ENCODE measurements at regions of chr4 and their contacts with region 1.

Region 1: GRCh38 chr4:158914218-158914617 is 145.4 kb downstream of the FNIP2 start:
- DNase-seq: no peak
- H3K4me3 ChIP-seq: no peak overlapping the region
- H3K27ac ChIP-seq: peak overlapping the region; percentile 79 to 88
- H3K4me1 ChIP-seq: peaks cover 8 to 18% of the 10 kb centered on the region in 2 donors
- H3K27me3 ChIP-seq: no peaks in the 10 kb centered on the region
- CTCF ChIP-seq: no peak

Region 2: DNA sequence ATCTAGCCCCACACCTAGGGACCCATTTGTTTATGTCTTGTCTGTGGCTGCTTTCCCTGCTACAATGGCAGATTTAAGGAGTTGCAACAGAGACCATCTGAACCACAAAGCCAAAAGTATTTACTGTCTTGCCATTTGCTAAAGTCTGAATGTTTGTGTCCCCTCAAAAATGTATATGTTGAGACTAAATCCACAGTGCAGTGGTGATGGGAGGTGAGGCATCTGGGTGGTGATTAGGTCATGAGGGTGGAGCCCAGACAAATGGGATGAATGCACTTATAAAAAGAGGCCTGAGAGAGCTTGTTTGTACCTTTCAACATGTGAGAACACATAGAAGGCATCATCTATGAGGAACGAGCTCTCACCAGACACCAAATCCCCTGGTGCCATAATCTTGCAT is 566.7 kb before region 1 on chr4:
- intact Hi-C with region 1: no loop called
- DNase-seq: no peak
- H3K4me3 ChIP-seq: no peak overlapping the region
- H3K27ac ChIP-seq: no peak overlapping the region
- H3K4me1 ChIP-seq: no peaks in the 10 kb centered on the region
- H3K27me3 ChIP-seq: no peaks in the 10 kb centered on the region
- CTCF ChIP-seq: no peak

Region 3: DNA sequence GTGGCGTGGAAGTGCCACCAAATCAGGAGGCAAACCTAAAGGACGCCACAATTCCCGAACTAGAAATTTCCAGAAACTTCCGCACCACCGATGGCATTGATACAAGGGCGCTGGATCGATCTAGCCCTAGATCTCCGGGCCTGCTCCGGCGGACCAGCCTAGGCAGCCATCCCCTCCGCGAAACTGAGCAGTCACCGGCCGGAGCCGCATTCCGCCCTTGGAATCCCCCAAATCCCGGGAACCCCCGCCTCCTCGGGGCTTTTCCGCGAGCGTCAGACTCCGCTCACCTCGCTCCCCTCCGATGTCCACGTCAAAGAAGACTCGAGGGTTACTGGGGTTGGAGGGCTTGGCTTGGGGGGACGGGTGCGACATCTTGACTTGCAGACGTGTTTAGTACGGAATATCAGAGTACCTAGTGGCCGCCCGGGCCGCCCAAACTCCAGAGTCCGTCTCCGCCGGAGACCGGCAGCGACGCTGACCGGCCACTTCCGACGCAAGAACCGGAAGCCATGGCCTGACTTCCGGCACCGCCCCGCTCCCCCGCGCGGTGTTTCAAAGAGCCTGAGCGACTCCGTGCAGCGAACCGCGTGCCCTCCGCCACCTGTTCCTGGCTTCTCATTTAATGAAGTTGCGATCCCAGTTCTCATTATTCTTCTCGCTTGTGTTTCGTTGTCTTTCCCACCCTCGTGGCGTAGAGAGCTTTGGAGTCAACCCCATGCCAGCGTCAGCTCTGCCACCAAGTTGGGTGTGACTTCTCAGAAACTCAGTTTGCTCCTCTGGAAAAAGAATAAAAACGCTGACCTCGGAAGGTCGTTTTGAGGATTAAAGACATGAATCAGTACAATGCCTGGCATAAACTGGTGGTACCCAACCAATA is 191.1 kb before region 1 on chr4 and contains the start of gene PPID:
- intact Hi-C with region 1: loop called (anchors 5 kb)
- DNase-seq: peak; percentile 11 to 90
- H3K4me3 ChIP-seq: peak within 1 kb of the TSS; percentile 68 to 85
- H3K27ac ChIP-seq: peak within 1 kb of the TSS; percentile 84 to 92
- H3K4me1 ChIP-seq: peaks cover 0 to 13% of the 10 kb centered on the region in 2 donors
- H3K27me3 ChIP-seq: no peaks in the 10 kb centered on the region
- CTCF ChIP-seq: no peak
- total RNA-seq, gene PPID: 20.8 TPM

Region 4: DNA sequence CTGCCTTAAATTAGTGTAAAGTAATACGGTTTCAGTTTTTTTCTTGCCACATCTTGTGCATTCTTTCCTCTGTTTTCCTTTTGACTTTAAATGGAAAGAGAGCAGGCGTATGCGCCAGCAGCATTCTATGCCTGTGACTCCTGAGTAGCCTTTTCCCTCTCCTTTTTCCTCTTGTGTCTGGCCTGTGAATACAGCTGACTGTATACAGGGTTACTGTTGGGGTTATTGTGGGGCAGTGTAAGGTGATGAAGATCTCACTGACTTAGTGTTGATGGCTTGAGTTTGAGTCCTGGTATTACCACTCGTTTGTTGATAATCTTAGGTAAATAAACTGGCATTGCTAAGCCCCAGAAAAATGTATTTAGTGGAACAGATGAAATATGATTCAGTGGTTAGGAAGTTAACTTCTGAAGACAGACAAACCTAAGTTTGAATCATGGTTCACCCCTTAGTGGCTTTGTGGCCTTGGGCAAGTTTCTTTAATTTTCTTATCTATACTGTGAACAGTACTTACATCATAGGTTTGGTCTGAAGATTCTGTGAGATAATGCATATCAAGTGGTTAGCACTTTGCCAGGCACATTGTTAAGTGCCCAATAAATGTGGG is 40.3 kb before region 1 on chr4:
- intact Hi-C with region 1: loop called (anchors 2 kb)
- DNase-seq: no peak
- H3K4me3 ChIP-seq: no peak overlapping the region
- H3K27ac ChIP-seq: peak overlapping the region; percentile 31 to 46
- H3K4me1 ChIP-seq: peaks cover 5 to 24% of the 10 kb centered on the region in 2 donors
- H3K27me3 ChIP-seq: no peaks in the 10 kb centered on the region
- CTCF ChIP-seq: no peak

Region 5: GRCh38 chr4:159042097-159042605 is 127.9 kb after region 1 on chr4:
- intact Hi-C with region 1: no loop called
- DNase-seq: no peak
- H3K4me3 ChIP-seq: no peak overlapping the region
- H3K27ac ChIP-seq: no peak overlapping the region
- H3K4me1 ChIP-seq: no peaks in the 10 kb centered on the region
- H3K27me3 ChIP-seq: no peaks in the 10 kb centered on the region
- CTCF ChIP-seq: no peak

Measured in ascending aorta (tissue), 2 donors.